H1 (cell line): ENCODE measurements at regions of chr5 and their contacts with region 1.

Region 1: DNA sequence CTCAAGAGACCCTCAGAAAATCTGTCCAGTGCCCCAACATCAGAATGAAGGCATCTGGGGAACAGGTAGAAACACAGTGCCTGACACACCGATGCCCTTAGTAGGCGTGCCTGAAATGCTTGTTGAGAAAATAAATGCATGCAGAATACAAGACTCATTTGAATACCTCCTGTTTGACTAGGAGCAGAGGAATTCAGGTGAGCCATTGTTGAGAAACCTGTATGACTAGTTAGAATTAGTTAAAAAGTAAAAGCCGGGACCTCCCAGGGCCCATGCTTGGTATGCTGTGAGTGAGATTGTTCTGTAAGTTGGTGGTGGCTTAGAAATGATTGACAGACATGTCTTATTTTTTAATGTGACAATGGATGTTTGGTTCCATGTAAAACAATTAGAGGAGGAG is 55.0 kb downstream of the WWC1 start:
- DNase-seq: no peak
- H3K4me3 ChIP-seq: peak overlapping the region in 2 of 4 experiments; percentile 24 to 25; a peak in 1 of 8 replicates
- H3K27ac ChIP-seq: no peak overlapping the region
- H3K4me1 ChIP-seq: peaks cover 17 to 44% (median 27%) of the 10 kb centered on the region in 4 experiments
- H3K27me3 ChIP-seq: no peaks in the 10 kb centered on the region
- CTCF ChIP-seq: no peak
- EP300 ChIP-seq: no peak
- POLR2A ChIP-seq: no peak
- RAD21 ChIP-seq: no peak

Region 2: GRCh38 chr5:168328814-168329213 is 17.6 kb before region 1 on chr5:
- CTCF ChIA-PET with region 1: interaction called, 18 read pairs
- POLR2A ChIA-PET with region 1: interaction called, 5 read pairs
- DNase-seq: peak in 1 of 2 experiments; percentile 69
- H3K4me3 ChIP-seq: peak overlapping the region in 1 of 4 experiments; percentile 38; a peak in 2 of 8 replicates
- H3K27ac ChIP-seq: no peak overlapping the region
- H3K4me1 ChIP-seq: peaks cover 21 to 36% (median 26%) of the 10 kb centered on the region in 4 experiments
- H3K27me3 ChIP-seq: no peaks in the 10 kb centered on the region
- CTCF ChIP-seq: no peak
- EP300 ChIP-seq: peak in 1 of 2 experiments; percentile 95; a peak in 2 of 3 replicates
- POLR2A ChIP-seq: no peak
- RAD21 ChIP-seq: no peak

Region 3: DNA sequence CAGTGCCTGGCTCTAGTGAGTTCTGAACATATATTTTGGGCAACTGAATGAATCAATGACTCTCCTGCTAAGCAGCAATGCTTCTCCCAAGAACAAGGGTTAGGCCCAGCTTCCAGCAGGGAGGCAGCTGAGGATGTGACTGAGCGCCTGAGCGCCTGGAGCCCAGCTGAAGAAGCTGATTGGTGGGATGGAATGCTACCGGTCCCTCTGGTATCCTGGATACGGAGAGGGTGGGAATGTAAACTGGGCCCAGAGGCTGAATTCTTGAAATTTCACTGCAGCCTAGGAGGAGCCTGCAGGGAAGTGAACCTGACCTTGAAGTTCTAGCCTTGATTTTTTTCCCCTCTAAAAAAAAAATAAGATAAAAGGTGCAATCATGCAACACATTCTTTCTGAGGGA is 11.7 kb before region 1 on chr5:
- CTCF ChIA-PET with region 1: interaction called, 18 read pairs
- POLR2A ChIA-PET with region 1: interaction called, 4 read pairs
- DNase-seq: peak; percentile 64 to 81
- H3K4me3 ChIP-seq: peak overlapping the region in 1 of 4 experiments; percentile 31; a peak in 1 of 8 replicates
- H3K27ac ChIP-seq: peak overlapping the region; percentile 34; the same call in 1 of the 2 replicates
- H3K4me1 ChIP-seq: peaks cover 20 to 36% (median 29%) of the 10 kb centered on the region in 4 experiments
- H3K27me3 ChIP-seq: no peaks in the 10 kb centered on the region
- CTCF ChIP-seq: no peak
- EP300 ChIP-seq: peak in 1 of 2 experiments; percentile 52; a peak in 1 of 3 replicates
- POLR2A ChIP-seq: peak in 1 of 2 experiments; percentile 39; a peak in 1 of 3 replicates
- RAD21 ChIP-seq: no peak

Region 4: GRCh38 chr5:168359832-168360460 is 13.5 kb after region 1 on chr5:
- CTCF ChIA-PET with region 1: interaction called, 46 read pairs
- POLR2A ChIA-PET with region 1: interaction called, 8 read pairs
- DNase-seq: no peak
- H3K4me3 ChIP-seq: no peak overlapping the region
- H3K27ac ChIP-seq: no peak overlapping the region
- H3K4me1 ChIP-seq: peaks cover 0 to 19% (median 5%) of the 10 kb centered on the region in 4 experiments; a peak in 6 of 7 replicates
- H3K27me3 ChIP-seq: no peaks in the 10 kb centered on the region
- CTCF ChIP-seq: no peak
- EP300 ChIP-seq: no peak
- POLR2A ChIP-seq: no peak
- RAD21 ChIP-seq: no peak

Region 5: GRCh38 chr5:168365581-168366081 is 19.2 kb after region 1 on chr5:
- CTCF ChIA-PET with region 1: interaction called, 46 read pairs
- POLR2A ChIA-PET with region 1: interaction called, 8 read pairs
- DNase-seq: peak in 1 of 2 experiments; percentile 67
- H3K4me3 ChIP-seq: no peak overlapping the region
- H3K27ac ChIP-seq: no peak overlapping the region
- H3K4me1 ChIP-seq: peaks cover 7 to 19% (median 13%) of the 10 kb centered on the region in 4 experiments
- H3K27me3 ChIP-seq: no peaks in the 10 kb centered on the region
- CTCF ChIP-seq: peak; percentile 37 to 54 (median 52); a peak in 3 of 4 replicates
- EP300 ChIP-seq: no peak
- POLR2A ChIP-seq: no peak
- RAD21 ChIP-seq: peak; percentile 42 to 47

Region 6: GRCh38 chr5:168578538-168579487 is 232.4 kb after region 1 on chr5 and contains the start of gene PANK3:
- CTCF ChIA-PET with region 1: no interaction called
- POLR2A ChIA-PET with region 1: no interaction called
- DNase-seq: peak in 1 of 2 experiments; percentile 80
- H3K4me3 ChIP-seq: peak within 1 kb of the TSS; percentile 79 to 97 (median 88)
- H3K27ac ChIP-seq: peak within 1 kb of the TSS; percentile 86
- H3K4me1 ChIP-seq: peaks cover 0 to 9% (median 4%) of the 10 kb centered on the region in 4 experiments; a peak in 4 of 7 replicates
- H3K27me3 ChIP-seq: no peaks in the 10 kb centered on the region
- CTCF ChIP-seq: peak in 1 of 3 experiments; percentile 3; a peak in 1 of 4 replicates
- EP300 ChIP-seq: no peak
- POLR2A ChIP-seq: no peak; a peak in 1 of 3 replicates
- RAD21 ChIP-seq: no peak
- total RNA-seq, gene PANK3: 101 and 103 TPM in 2 replicates